Colonic mucosa (tissue), 4 donors: ENCODE measurements at regions of chr6 and their contacts with region 1.

Region 1: GRCh38 chr6:153231048-153231646 is 100.1 kb upstream of the RGS17 start:
- DNase-seq: peak; percentile 61
- H3K4me3 ChIP-seq: no peak overlapping the region
- H3K27ac ChIP-seq: no peak overlapping the region
- H3K4me1 ChIP-seq: no peaks in the 10 kb centered on the region
- H3K27me3 ChIP-seq: no peaks in the 10 kb centered on the region
- CTCF ChIP-seq: peak; percentile 83

Region 2: GRCh38 chr6:153312641-153313040 is 81.5 kb after region 1 on chr6:
- intact Hi-C with region 1: loop called (anchors 5 kb)
- DNase-seq: peak; percentile 35
- H3K4me3 ChIP-seq: no peak overlapping the region
- H3K27ac ChIP-seq: no peak overlapping the region
- H3K4me1 ChIP-seq: no peaks in the 10 kb centered on the region
- H3K27me3 ChIP-seq: no peaks in the 10 kb centered on the region
- CTCF ChIP-seq: peak; percentile 38

Region 3: DNA sequence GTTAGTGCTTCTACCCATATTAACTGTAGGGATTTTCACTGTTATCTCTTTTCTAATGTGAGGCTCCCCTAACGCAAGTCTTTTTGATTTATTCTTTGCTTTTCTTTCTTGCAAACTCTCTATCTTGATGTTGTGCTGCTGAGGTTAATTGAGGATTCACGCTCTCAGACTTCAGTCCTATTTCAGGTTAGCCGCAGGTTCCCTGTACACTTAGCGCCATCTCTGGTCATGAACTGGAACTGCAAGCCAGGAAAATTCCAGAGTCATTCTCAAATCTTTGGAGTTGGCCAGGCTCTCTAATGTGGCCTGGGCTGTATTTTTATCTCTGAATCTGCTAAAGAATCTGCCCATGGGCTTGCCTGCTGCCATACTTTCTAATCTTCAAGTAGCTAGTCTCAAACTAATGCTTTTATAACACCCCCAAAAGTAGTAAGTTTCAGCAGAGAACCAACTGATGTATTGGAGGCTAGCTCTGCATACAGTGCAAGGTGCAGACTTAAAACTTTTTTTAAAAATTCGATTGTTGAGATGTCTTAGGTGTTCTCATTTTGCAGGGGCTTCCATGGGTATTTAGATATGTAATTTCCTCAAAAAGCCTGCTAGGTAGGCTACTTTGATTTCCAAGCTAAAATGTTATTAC is 716.8 kb after region 1 on chr6:
- intact Hi-C with region 1: loop called (anchors 5 kb)
- DNase-seq: peak; percentile 20
- H3K4me3 ChIP-seq: no peak overlapping the region
- H3K27ac ChIP-seq: no peak overlapping the region
- H3K4me1 ChIP-seq: no peaks in the 10 kb centered on the region
- H3K27me3 ChIP-seq: no peaks in the 10 kb centered on the region
- CTCF ChIP-seq: peak; percentile 81